SK-N-SH (cell line): ENCODE measurements at regions of chr3 and their contacts with region 1.

Region 1: DNA sequence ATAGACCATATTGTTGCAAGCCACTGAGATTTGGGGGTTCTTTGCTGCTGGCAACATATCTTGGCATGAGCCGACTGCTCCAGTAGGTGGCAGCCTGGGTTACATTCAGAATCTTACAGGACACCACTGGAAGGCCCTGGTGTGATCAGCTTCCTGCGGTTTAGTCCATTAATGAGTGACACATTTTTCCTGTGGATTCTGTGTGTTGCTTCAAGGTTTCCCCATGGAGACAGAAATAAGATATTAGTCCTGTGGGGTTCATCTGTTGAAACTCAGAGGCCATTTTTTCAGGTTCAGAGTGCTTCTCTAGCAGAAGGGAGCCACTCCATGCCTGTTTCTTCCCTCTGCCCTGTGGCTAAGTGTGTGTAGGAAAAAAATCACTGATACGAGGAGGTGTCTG is 116.2 kb downstream of the MFSD1 start:
- DNase-seq: peak; percentile 58
- H3K4me3 ChIP-seq: no peak overlapping the region
- H3K27ac ChIP-seq: no peak overlapping the region; a peak in 1 of 4 replicates
- H3K4me1 ChIP-seq: peaks cover 0 to 10% of the 10 kb centered on the region in 2 experiments; a peak in 2 of 4 replicates
- H3K27me3 ChIP-seq: no peaks in the 10 kb centered on the region
- CTCF ChIP-seq: peak; percentile 83
- EP300 ChIP-seq: 0 out of 4 replicates have a peak, but pooled peaks of 1 of the 2 experiments have one; percentile 17
- RAD21 ChIP-seq: peak; percentile 83

Region 2: GRCh38 chr3:158863247-158863646 is 54.8 kb before region 1 on chr3:
- CTCF ChIA-PET with region 1: interaction called, 11 read pairs
- POLR2A ChIA-PET with region 1: no interaction called
- DNase-seq: no peak
- H3K4me3 ChIP-seq: no peak overlapping the region
- H3K27ac ChIP-seq: no peak overlapping the region
- H3K4me1 ChIP-seq: no peaks in the 10 kb centered on the region
- H3K27me3 ChIP-seq: no peaks in the 10 kb centered on the region
- CTCF ChIP-seq: no peak
- EP300 ChIP-seq: no peak
- RAD21 ChIP-seq: no peak

Region 3: GRCh38 chr3:159137949-159138348 is 219.9 kb after region 1 on chr3:
- CTCF ChIA-PET with region 1: no interaction called
- POLR2A ChIA-PET with region 1: no interaction called
- DNase-seq: no peak
- H3K4me3 ChIP-seq: no peak overlapping the region
- H3K27ac ChIP-seq: no peak overlapping the region
- H3K4me1 ChIP-seq: no peaks in the 10 kb centered on the region; a peak in 1 of 4 replicates
- H3K27me3 ChIP-seq: no peaks in the 10 kb centered on the region
- CTCF ChIP-seq: no peak
- EP300 ChIP-seq: no peak
- RAD21 ChIP-seq: no peak

Region 4: DNA sequence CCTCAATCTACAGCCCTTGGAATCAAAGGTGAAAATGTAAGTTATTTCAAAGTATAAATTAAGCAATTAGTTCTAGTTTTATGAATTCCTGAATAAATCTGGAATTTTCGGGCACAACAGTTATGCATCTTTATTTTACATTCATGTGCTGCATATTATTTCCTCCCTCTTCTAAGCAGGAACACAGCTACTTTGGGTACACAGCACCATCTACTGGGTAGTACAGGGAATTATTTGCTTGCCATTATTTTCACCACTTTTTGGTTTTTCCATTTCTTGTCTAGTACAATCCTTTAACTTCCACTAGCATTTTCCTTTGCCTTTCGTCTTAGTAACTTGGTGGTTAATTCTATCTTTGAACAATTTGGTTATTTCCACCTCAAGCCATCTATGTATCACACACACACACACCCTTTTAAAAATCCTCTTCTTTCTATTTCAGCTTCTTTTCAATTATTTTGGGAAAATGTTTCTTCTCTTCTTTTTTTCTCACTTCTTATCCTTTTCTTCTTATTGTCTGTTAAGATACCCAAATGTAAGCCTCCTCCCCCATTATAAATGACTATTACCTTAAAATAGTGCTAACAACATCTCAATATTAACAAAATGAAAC is 334.9 kb after region 1 on chr3:
- CTCF ChIA-PET with region 1: interaction called, 108 read pairs
- POLR2A ChIA-PET with region 1: no interaction called
- DNase-seq: peak; percentile 36
- H3K4me3 ChIP-seq: peak overlapping the region in 1 of 2 experiments; percentile 14; a peak in 1 of 4 replicates
- H3K27ac ChIP-seq: peak overlapping the region; percentile 50 to 83; a peak in 3 of 4 replicates
- H3K4me1 ChIP-seq: peaks cover 0 to 24% of the 10 kb centered on the region in 2 experiments; a peak in 2 of 4 replicates
- H3K27me3 ChIP-seq: no peaks in the 10 kb centered on the region
- CTCF ChIP-seq: peak; percentile 93
- EP300 ChIP-seq: no peak
- RAD21 ChIP-seq: peak; percentile 83

Region 5: GRCh38 chr3:159266779-159267178 is 348.8 kb after region 1 on chr3:
- CTCF ChIA-PET with region 1: interaction called, 108 read pairs
- POLR2A ChIA-PET with region 1: no interaction called
- DNase-seq: peak; percentile 24
- H3K4me3 ChIP-seq: no peak overlapping the region
- H3K27ac ChIP-seq: no peak overlapping the region
- H3K4me1 ChIP-seq: peaks cover 0 to 7% of the 10 kb centered on the region in 2 experiments; a peak in 2 of 4 replicates
- H3K27me3 ChIP-seq: no peaks in the 10 kb centered on the region
- CTCF ChIP-seq: peak; percentile 44; the same call in 1 of the 2 replicates
- EP300 ChIP-seq: no peak
- RAD21 ChIP-seq: peak; percentile 64

Region 6: DNA sequence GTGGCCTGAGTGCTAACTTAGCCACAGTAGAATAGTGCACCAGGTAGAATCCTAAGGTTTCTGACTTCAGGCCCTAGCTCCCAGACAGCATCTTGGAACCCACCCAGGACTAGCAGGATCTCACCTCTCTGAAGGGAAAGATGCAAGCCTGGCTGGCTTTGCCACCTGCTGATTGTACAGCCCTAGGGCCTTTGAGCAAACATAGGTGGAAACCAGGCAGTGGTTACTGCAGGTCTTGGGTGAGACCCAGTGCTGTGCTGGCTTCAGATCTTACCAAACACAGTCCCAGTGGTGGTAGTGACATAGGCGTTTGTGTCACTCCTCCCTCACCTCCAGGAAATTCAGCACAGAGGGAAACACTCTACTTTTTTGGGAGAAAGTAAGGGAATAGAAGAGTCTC is 486.6 kb after region 1 on chr3:
- CTCF ChIA-PET with region 1: no interaction called
- POLR2A ChIA-PET with region 1: no interaction called
- DNase-seq: no peak
- H3K4me3 ChIP-seq: no peak overlapping the region
- H3K27ac ChIP-seq: no peak overlapping the region
- H3K4me1 ChIP-seq: no peaks in the 10 kb centered on the region
- H3K27me3 ChIP-seq: no peaks in the 10 kb centered on the region
- CTCF ChIP-seq: no peak
- EP300 ChIP-seq: no peak
- RAD21 ChIP-seq: no peak